ENCODE measurements at regions of chr12 and their contacts with region 1.

Region 1: DNA sequence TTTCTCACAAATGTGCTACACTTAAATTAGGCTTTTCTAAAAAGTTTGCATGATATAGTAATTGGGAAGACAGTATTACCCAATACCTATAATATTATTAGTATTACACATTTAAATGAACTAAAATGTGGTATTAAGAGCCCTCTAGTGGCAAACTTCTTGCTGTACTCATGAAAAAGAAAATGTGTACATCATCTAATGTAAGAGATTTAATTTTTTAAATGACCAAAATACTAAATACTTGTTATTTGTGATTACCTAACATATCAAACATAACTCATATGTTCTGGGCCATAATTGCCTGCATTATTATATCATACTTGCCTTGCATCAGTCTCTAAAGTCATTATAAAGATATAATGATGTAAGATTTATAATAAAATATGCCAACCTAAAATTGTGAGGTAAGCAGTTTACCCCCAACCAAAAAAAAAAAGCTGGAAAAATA is 64.2 kb downstream of the DNAI7 start:
- DNase-seq: peak; percentile 38
- CTCF ChIP-seq: peak; percentile 45

Region 2: GRCh38 chr12:25146686-25147085 is 15.9 kb after region 1 on chr12:
- CTCF ChIA-PET with region 1: interaction called, 10 read pairs
- POLR2A ChIA-PET with region 1: no interaction called
- DNase-seq: no peak
- CTCF ChIP-seq: no peak

Region 3: DNA sequence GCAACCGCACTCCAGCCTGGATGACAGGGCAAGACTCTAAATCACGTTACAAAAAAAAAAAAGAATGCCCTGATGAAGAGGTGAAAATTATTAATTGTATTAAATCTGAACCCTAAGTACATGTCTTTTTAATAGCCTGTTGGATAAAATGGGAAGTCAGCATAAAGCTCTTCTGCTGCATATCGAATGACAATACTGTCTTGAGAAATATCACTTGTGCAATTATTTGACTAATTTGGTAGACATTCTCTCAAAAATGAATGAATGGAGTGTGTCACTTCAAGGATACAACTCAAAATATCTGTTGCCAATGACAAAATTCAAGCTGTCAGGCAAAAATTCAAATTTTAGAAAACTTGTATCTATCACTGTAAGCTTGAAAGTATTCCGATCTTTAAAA is 25.3 kb after region 1 on chr12:
- CTCF ChIA-PET with region 1: interaction called, 15 read pairs
- POLR2A ChIA-PET with region 1: no interaction called
- DNase-seq: no peak
- CTCF ChIP-seq: no peak